Activated T-helper 2 cell treated with anti-CD3 and anti-CD28 coated beads, Interferon-gamma antibody, Interleukin-2, Interleukin-4, amounts not matched to agents 10 μg/mL and 5 μg/mL and 100 μg/mL, durations not matched to agents 14 hours and 24 hours and 36 hours (primary cell): ENCODE measurements at regions of chr2 and their contacts with region 1.

Region 1: DNA sequence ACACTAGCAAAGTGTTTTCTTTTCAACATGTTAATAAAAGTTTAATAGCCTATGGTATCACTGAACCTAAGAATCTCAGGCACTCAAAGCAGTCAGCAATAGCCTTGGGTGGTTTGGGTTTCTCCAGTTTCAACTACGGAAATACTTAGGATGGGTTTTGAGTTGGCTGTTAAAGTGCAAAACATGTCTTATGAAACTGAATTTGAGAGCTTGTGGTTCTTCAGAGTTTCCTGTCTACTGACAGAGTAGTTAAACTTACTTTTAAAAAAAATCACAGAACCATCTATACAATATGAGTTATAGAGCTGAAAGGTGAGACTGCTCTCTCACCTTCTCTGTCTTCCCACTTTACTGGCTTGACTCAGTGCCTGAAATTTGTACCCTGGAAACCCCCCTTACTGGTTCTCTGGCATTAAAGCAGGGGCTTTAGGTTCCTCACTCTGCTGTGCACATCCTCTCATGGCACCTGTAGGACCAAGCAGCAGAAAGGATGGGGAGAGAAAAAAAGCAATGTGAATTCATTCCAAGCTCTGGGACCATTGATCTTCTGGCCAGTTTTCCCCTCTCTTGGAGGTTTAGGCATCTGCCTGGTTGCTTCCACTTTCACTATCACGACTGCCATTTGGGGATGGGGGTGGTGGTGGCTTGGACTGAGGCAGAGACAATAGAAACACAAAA is 18.1 kb downstream of the CCDC141 start:
- DNase-seq: peak; percentile 18
- H3K4me3 Mint-ChIP-seq: peak overlapping the region; percentile 64
- H3K27ac Mint-ChIP-seq: peak overlapping the region; percentile 83
- H3K4me1 Mint-ChIP-seq: peaks cover 22% of the 10 kb centered on the region
- H3K27me3 Mint-ChIP-seq: no peaks in the 10 kb centered on the region

Region 2: DNA sequence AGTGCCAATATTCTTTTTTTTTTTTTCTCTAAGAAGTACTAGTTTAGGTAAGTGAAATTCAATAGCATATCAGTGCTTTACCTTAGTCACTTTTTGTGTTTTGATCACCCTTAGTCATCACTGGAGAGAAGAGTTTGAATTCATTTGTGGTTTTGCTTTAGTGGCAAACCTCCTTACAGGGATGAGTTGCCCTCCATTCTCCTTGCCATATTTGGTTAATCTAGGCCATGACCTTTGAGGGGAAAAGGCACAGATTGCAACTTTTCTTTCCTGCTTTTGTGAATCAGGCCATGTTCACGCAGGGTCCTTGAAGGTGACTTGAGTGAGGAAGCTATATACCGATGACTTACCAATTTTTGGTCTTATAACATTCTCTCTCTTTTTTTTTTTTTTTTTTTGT is 517.2 kb before region 1 on chr2:
- intact Hi-C with region 1: loop called (anchors 5 kb)
- DNase-seq: no peak
- H3K4me3 Mint-ChIP-seq: peak overlapping the region; percentile 58
- H3K27ac Mint-ChIP-seq: peak overlapping the region; percentile 78
- H3K4me1 Mint-ChIP-seq: peaks cover 27% of the 10 kb centered on the region
- H3K27me3 Mint-ChIP-seq: no peaks in the 10 kb centered on the region

Region 3: DNA sequence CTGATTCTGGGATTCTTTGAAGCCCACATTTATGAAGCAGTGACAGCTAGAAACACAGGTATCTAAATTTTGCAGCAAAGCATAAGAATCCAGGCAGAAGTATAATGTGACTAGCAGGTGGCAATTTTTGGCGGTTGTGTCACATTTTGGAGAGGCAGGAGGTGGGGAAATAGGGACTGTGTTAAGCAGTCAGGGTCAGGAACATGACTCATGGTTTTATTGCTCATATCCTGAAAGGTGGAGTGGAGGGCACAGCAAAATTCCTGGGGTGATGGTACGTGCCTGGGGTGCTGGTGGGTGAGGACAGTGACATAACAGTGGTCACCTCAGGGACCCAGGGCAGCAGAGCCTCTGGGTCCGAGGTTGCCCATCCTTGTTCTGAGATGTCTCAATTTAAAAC is 161.2 kb before region 1 on chr2:
- intact Hi-C with region 1: loop called (anchors 1 kb)
- DNase-seq: no peak
- H3K4me3 Mint-ChIP-seq: no peak overlapping the region
- H3K27ac Mint-ChIP-seq: no peak overlapping the region
- H3K4me1 Mint-ChIP-seq: peaks cover 22% of the 10 kb centered on the region
- H3K27me3 Mint-ChIP-seq: no peaks in the 10 kb centered on the region

Region 4: DNA sequence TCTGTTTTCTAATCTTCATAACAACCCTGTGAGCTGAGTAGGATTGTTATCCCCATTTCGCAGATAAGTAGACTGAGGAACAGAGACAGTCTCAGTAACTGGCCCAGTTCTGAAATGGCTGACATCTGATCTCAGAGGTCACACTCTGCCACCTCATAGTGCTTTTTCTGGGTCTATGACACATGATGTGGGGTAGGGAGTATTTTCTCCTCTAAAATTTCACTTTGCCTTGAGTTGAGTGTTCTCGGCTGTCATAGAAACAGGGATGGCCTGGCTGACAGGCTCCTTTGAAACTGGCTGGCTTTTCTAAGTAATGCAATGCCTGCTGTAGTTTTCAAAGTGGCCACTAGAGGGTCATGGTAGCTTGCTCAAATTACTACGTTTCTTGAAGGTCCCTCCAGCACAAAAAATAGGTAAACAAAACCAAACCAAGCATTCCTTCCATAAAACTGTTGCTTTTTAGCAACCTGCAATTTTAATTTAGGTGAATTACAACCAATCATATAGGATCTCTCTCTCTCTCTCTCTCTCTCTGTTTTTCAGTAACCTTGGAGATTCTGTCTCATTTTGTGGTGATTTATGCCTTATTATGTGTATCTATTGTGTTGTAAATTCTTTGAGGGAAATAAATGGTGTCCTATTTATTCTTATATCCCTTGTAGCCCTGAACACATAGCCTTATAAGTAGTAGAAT is 140.5 kb before region 1 on chr2:
- intact Hi-C with region 1: loop called (anchors 5 kb)
- DNase-seq: peak; percentile 38
- H3K4me3 Mint-ChIP-seq: no peak overlapping the region
- H3K27ac Mint-ChIP-seq: no peak overlapping the region
- H3K4me1 Mint-ChIP-seq: peaks cover 9% of the 10 kb centered on the region
- H3K27me3 Mint-ChIP-seq: no peaks in the 10 kb centered on the region

Region 5: GRCh38 chr2:179049546-179050311 is 17.9 kb after region 1 on chr2 and contains the start of gene CCDC141:
- intact Hi-C with region 1: loop called (anchors 2 kb)
- DNase-seq: peak; percentile 31
- H3K4me3 Mint-ChIP-seq: peak within 1 kb of the TSS; percentile 80
- H3K27ac Mint-ChIP-seq: peak within 1 kb of the TSS; percentile 81
- H3K4me1 Mint-ChIP-seq: peaks cover 50% of the 10 kb centered on the region
- H3K27me3 Mint-ChIP-seq: no peaks in the 10 kb centered on the region
- total RNA-seq, gene CCDC141: 3.6 and 4.2 TPM in 2 replicates

Region 6: DNA sequence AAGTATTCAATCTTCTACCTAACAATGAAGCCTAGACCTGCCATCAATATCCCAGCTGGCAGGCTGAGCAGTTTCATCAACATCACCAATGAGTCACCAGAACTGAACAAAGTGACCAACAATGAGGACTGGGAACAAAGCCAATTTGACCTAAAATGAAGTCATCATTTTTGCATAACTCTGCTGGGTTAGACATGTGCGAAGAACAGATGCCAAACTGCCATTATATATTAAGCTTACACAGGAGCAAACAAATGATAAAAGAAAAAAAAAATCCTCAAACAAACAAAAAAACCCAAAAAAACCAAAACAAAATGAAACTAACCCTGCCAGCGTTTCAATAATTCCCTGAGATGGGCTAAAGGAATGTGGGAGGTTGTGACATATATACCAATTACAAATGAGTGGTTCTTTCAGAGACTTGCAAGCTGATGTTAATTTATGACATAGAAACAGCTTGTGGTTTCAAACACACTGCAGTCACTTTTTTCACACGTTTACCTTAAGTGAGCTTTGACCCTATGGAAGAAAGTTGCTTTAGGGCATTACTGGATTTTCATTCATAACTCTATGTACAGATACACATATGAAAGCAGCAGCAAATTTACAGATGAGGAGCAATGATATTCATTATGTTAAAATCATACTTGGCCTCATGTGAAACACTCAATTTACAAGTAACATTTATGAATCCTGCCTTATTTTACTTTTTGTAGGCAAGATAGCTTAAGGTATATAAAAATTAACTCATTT is 75.0 kb after region 1 on chr2:
- intact Hi-C with region 1: loop called (anchors 1 kb)
- DNase-seq: no peak
- H3K4me3 Mint-ChIP-seq: no peak overlapping the region
- H3K27ac Mint-ChIP-seq: peak overlapping the region; percentile 70
- H3K4me1 Mint-ChIP-seq: peaks cover 32% of the 10 kb centered on the region
- H3K27me3 Mint-ChIP-seq: no peaks in the 10 kb centered on the region

Region 7: GRCh38 chr2:179186126-179186525 is 154.3 kb after region 1 on chr2:
- intact Hi-C with region 1: no loop called
- DNase-seq: no peak
- H3K4me3 Mint-ChIP-seq: no peak overlapping the region
- H3K27ac Mint-ChIP-seq: no peak overlapping the region
- H3K4me1 Mint-ChIP-seq: peaks cover 5% of the 10 kb centered on the region
- H3K27me3 Mint-ChIP-seq: no peaks in the 10 kb centered on the region

Region 8: GRCh38 chr2:179240481-179241451 is 208.9 kb after region 1 on chr2:
- intact Hi-C with region 1: loop called (anchors 5 kb)
- DNase-seq: no peak
- H3K4me3 Mint-ChIP-seq: no peak overlapping the region
- H3K27ac Mint-ChIP-seq: peak overlapping the region; percentile 15
- H3K4me1 Mint-ChIP-seq: peaks cover 26% of the 10 kb centered on the region
- H3K27me3 Mint-ChIP-seq: no peaks in the 10 kb centered on the region